ENCODE measurements at regions of chr9 and their contacts with region 1.

Region 1: GRCh38 chr9:99266255-99267023 is 44.4 kb downstream of the SEC61B start:
- DNase-seq: peak; percentile 44
- H3K4me3 ChIP-seq: no peak overlapping the region
- H3K27ac ChIP-seq: no peak overlapping the region
- H3K4me1 ChIP-seq: no peaks in the 10 kb centered on the region
- H3K27me3 ChIP-seq: no peaks in the 10 kb centered on the region
- CTCF ChIP-seq: peak; percentile 71 to 89

Region 2: DNA sequence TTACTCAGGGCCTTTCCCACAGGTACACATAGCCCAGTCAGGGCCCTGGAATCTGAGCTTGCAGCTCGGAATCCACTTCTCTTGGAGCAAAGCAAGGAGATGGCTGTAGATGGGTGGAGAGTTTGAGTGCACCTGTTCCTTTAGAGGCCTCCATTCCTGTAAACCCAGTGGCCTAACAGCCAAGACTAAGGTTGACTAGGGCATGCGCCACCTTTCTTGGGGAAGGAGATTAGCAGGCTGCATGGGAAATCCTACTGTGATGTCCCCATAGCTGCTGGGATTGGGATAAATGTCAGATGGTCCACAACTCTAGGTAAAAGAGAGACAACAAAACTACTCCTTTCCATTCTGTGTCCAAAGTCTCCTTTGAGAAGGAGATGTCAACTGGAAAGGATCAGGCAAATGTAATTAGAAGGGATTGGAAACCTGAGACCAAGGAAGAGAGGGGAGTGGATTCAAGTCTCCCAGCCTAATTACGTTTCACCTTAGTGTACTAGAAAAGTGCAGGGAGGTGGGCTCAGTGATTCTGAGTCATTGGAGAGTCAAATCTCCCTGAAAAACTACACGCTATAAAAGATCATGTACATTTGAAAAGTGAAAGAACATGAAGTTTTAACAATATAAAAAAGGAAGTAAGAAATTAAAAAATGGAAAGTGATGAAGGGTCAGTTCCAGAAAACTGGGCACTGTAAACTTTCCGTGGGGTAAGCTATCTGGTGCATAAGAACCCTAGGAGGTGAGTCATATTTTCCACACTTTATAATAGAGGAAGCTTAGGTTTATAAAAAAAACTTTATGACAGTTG is 59.9 kb after region 1 on chr9:
- CTCF ChIA-PET with region 1: no interaction called
- dilution Hi-C with region 1: no loop called
- in situ Hi-C with region 1: no loop called
- intact Hi-C with region 1: no loop called
- DNase-seq: no peak
- H3K4me3 ChIP-seq: no peak overlapping the region
- H3K27ac ChIP-seq: no peak overlapping the region
- H3K4me1 ChIP-seq: no peaks in the 10 kb centered on the region
- H3K27me3 ChIP-seq: peaks cover 3% of the 10 kb centered on the region
- CTCF ChIP-seq: peak in 1 of 2 donors; percentile 1

Region 3: DNA sequence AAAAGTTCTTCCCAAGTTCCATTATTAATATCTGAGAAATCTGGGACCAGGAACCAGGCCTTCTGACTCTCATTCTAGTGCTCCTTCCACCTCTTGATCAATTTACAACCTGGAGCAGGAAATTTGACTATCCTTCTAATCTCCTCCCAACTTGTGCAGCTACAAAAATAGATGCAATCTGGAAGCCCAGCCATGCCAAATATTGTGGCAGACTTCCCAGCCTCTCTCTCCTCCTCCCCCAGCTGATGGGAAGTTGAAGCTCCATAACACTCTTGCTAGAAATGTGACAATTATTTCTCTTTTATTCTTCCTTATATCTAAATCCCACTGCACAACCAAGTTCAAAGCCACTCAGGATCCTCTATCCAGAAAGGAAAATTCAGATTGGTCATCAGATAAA is 207.7 kb after region 1 on chr9:
- CTCF ChIA-PET with region 1: no interaction called
- dilution Hi-C with region 1: no loop called
- in situ Hi-C with region 1: no loop called
- intact Hi-C with region 1: loop called (anchors 10 kb)
- DNase-seq: no peak
- H3K4me3 ChIP-seq: no peak overlapping the region
- H3K27ac ChIP-seq: no peak overlapping the region
- H3K4me1 ChIP-seq: no peaks in the 10 kb centered on the region
- H3K27me3 ChIP-seq: no peaks in the 10 kb centered on the region
- CTCF ChIP-seq: no peak

Region 4: GRCh38 chr9:100011062-100011681 is 744.7 kb after region 1 on chr9:
- CTCF ChIA-PET with region 1: no interaction called
- dilution Hi-C with region 1: no loop called
- in situ Hi-C with region 1: no loop called
- intact Hi-C with region 1: loop called (anchors 1 kb)
- DNase-seq: peak; percentile 29
- H3K4me3 ChIP-seq: no peak overlapping the region
- H3K27ac ChIP-seq: no peak overlapping the region
- H3K4me1 ChIP-seq: no peaks in the 10 kb centered on the region
- H3K27me3 ChIP-seq: no peaks in the 10 kb centered on the region
- CTCF ChIP-seq: peak; percentile 60 to 69